Naive thymus-derived CD4-positive, alpha-beta T cell (primary cell): ENCODE measurements at regions of chr20 and their contacts with region 1.

Region 1: DNA sequence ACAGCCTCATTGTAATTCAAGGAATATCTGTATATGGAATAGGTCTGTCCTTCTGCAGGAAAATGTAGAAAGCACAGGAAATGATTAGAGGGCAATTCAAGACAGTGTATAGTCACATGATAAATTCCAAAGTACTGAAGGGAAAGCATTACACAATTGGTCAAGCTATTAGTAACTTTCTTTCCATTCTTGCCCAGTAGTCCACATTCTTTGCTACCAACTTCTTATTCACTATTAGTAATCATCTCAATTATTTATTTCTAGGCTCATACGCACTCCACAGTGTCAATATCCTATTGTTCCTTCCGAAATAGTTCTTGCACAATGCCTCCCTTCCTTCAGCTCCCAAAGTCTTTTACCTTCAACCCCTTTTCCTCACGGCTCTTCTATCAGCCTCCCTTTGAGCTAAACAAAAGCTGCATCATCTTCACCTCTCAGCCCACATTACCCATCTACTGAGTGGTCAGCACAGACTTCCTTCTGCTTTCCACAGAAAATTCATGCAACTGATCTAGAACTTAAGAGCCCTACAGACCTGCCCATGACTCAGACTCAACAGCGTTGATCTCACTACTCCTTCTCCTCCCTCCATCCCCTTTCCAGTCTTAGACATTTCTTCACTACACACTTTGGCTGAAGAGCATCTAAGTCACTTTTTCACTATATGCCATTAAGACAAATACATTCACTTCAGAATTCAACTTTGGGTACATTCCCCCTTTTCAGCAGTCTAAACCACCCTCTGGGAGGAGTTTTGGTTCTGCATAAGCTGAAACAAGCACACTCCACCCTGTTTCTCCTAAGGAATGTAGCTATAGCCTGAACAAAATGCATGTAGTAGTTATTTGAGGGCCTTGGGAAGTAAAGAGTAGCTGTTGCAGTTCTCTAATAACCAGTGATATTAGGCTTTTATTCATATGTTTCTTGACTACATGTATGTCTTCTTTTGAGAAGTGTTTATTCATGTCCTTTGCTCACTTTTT is 157.9 kb downstream of the KIF16B start:
- DNase-seq: no peak
- ATAC-seq: no peak
- H3K4me3 ChIP-seq: no peak overlapping the region
- H3K4me3 Mint-ChIP-seq: no peak overlapping the region
- H3K27ac ChIP-seq: no peak overlapping the region
- H3K27ac Mint-ChIP-seq: no peak overlapping the region
- H3K4me1 ChIP-seq: no peaks in the 10 kb centered on the region
- H3K4me1 Mint-ChIP-seq: no peaks in the 10 kb centered on the region
- H3K27me3 ChIP-seq: no peaks in the 10 kb centered on the region
- H3K27me3 Mint-ChIP-seq: no peaks in the 10 kb centered on the region

Region 2: GRCh38 chr20:16115911-16116552 is 299.3 kb before region 1 on chr20:
- CTCF ChIA-PET with region 1: no interaction called
- POLR2A ChIA-PET with region 1: no interaction called
- intact Hi-C with region 1: no loop called
- DNase-seq: no peak
- ATAC-seq: no peak
- H3K4me3 ChIP-seq: no peak overlapping the region
- H3K4me3 Mint-ChIP-seq: no peak overlapping the region
- H3K27ac ChIP-seq: no peak overlapping the region
- H3K27ac Mint-ChIP-seq: no peak overlapping the region
- H3K4me1 ChIP-seq: no peaks in the 10 kb centered on the region
- H3K4me1 Mint-ChIP-seq: no peaks in the 10 kb centered on the region
- H3K27me3 ChIP-seq: no peaks in the 10 kb centered on the region
- H3K27me3 Mint-ChIP-seq: peaks cover 0 to 5% (median 0%) of the 10 kb centered on the region in 5 donors

Region 3: DNA sequence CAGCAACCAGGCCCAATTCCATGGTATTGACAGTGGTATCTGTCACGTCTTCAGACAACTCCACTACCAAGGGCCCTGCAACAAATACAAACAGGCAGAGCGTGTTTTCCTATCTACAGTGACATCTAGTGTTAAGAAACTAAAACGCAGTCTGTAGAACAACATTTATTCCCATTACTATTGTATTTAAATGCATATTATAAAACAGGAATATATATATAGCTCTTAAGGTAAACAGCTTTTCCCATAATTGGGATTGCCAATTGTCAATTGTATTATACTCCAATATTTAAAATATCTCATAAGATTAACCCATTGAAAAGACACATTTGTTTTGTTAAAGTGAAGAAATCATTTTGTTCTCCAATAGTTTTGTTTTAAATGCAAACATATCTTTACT is 60.7 kb after region 1 on chr20:
- CTCF ChIA-PET with region 1: no interaction called
- POLR2A ChIA-PET with region 1: no interaction called
- intact Hi-C with region 1: loop called in 1 of 2 experiments (anchors 10 kb)
- DNase-seq: peak in 3 of 9 donors; percentile 0 to 21 (median 4)
- ATAC-seq: peak; percentile 54
- H3K4me3 ChIP-seq: no peak overlapping the region
- H3K4me3 Mint-ChIP-seq: no peak overlapping the region
- H3K27ac ChIP-seq: no peak overlapping the region
- H3K27ac Mint-ChIP-seq: no peak overlapping the region
- H3K4me1 ChIP-seq: no peaks in the 10 kb centered on the region
- H3K4me1 Mint-ChIP-seq: peaks cover 5 to 16% (median 8%) of the 10 kb centered on the region in 7 donors
- H3K27me3 ChIP-seq: no peaks in the 10 kb centered on the region
- H3K27me3 Mint-ChIP-seq: no peaks in the 10 kb centered on the region